ENCODE measurements at regions of chr12 and their contacts with region 1.

Region 1: GRCh38 chr12:72346363-72346944 is 74.3 kb downstream of the TRHDE start:
- DNase-seq: peak; percentile 93
- ATAC-seq: peak; percentile 97
- H3K4me3 ChIP-seq: no peak overlapping the region
- H3K27ac ChIP-seq: no peak overlapping the region
- H3K4me1 ChIP-seq: peaks cover 22% of the 10 kb centered on the region
- H3K27me3 ChIP-seq: no peaks in the 10 kb centered on the region
- CTCF ChIP-seq: peak; percentile 82

Region 2: GRCh38 chr12:71846322-71846940 is 500.0 kb before region 1 on chr12:
- CTCF ChIA-PET with region 1: no interaction called
- POLR2A ChIA-PET with region 1: no interaction called
- intact Hi-C with region 1: no loop called
- DNase-seq: peak; percentile 62
- ATAC-seq: peak; percentile 44; the same call in 1 of the 2 replicates
- H3K4me3 ChIP-seq: no peak overlapping the region
- H3K27ac ChIP-seq: no peak overlapping the region
- H3K4me1 ChIP-seq: peaks cover 11% of the 10 kb centered on the region
- H3K27me3 ChIP-seq: no peaks in the 10 kb centered on the region
- CTCF ChIP-seq: peak; percentile 76

Region 3: DNA sequence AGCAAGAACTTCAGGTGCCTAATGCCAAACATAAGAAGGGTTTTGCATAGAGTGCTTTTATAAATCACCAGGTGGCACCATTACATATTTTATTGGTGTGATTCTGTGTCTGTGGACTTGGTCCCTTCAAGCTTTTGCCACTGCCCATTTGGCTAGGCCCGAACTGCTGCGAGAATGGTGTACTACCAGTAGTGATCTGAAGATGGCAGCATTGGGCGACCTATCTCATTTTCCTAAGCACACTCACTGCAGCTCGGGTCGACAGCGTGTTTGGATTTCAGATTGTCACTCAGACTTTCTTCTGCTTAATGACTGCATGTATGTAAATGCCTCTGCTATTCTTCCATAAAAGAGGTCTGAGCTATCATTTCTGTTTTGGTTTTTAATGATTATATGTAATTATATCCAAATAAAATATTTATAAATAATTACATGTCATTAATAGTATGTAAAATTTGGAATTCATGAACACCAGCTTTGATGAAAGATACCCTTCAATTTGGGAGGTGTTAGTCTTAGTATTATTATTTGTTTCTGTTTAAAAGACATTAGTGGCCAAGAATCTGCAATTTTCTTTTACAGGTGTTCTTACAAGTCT is 329.3 kb before region 1 on chr12:
- CTCF ChIA-PET with region 1: interaction called, 3 read pairs
- POLR2A ChIA-PET with region 1: no interaction called
- intact Hi-C with region 1: loop called (anchors 2 kb)
- DNase-seq: peak; percentile 87
- ATAC-seq: peak; percentile 99
- H3K4me3 ChIP-seq: no peak overlapping the region
- H3K27ac ChIP-seq: no peak overlapping the region
- H3K4me1 ChIP-seq: no peaks in the 10 kb centered on the region
- H3K27me3 ChIP-seq: no peaks in the 10 kb centered on the region
- CTCF ChIP-seq: peak; percentile 86

Region 4: DNA sequence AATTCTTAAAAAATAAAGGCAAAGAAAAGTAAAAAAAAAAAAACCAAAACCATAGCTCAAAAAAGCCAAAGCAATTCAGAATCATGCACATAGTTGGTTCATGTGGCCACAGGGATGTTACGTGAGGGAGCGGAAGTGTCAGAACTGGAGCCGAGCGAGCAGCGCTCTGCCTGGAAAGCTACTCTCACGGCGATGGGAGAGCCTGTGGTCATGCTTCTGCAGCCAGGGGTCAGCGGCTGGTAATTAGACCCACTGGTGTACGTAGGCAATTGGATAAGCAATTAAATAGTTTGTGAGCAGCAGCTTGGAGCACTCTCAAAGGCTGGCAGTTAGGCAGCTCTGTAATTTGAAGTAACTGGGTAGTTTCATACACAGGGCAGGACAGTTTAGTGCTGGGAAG is 16.2 kb before region 1 on chr12:
- CTCF ChIA-PET with region 1: no interaction called
- POLR2A ChIA-PET with region 1: no interaction called
- intact Hi-C with region 1: no loop called
- DNase-seq: no peak
- ATAC-seq: no peak
- H3K4me3 ChIP-seq: no peak overlapping the region
- H3K27ac ChIP-seq: no peak overlapping the region
- H3K4me1 ChIP-seq: 0 out of 2 replicates have a peak, but pooled peaks cover 6% of the 10 kb centered on the region
- H3K27me3 ChIP-seq: no peaks in the 10 kb centered on the region
- CTCF ChIP-seq: no peak

Region 5: DNA sequence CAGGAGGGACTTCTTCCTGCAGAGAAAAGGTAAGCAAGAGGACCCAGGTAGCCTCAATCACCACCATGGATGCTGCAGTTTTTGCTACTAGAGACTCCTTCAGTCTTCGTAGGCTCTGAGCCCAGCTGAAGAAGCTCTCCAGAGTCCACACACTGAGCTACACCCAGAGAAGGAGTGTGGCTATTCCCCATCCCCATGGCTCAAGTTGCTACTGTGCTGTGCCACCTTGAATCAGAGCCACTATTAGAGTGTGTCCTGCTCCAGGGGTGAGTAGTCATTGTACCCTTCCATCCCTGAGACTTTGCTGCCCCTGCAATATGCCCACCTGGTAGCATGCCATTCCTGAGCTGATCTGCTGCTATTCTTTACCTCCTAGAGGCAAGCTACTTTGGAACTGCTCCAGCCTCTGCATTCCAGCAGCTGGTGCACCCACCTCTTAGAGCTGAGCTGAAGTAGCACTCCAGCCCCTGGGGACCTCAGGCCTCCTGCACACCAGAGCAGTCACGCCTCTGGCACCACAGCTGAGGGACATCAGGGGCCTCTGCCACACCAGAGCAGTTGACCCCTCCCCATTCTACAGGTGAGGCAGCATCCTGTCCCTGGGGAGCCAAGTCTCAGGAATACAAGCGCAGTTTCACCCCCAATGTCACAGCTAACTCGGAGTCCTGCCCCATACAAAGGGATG is 138.7 kb after region 1 on chr12:
- CTCF ChIA-PET with region 1: no interaction called
- POLR2A ChIA-PET with region 1: no interaction called
- intact Hi-C with region 1: loop called (anchors 10 kb)
- DNase-seq: no peak
- ATAC-seq: no peak
- H3K4me3 ChIP-seq: no peak overlapping the region
- H3K27ac ChIP-seq: no peak overlapping the region
- H3K4me1 ChIP-seq: no peaks in the 10 kb centered on the region
- H3K27me3 ChIP-seq: no peaks in the 10 kb centered on the region
- CTCF ChIP-seq: no peak

Region 6: DNA sequence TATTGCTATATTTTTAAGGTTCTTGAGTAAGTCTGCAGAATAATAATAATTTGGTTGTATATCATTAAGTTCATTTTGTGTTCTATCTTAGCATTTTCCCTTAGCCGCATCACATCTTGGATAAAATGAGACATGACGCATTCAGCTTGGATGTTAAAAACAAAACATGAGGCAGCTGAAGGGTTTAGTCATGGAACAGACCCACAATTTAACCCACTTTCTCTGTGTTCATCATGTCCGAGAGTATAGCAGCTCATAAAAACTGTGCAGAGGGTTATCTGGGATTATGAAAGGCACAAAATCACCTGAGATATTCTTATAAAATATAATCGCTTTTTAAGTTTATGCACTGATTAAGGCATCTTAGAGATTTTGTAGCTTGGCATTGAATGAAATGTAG is 145.0 kb after region 1 on chr12:
- CTCF ChIA-PET with region 1: interaction called, 10 read pairs
- POLR2A ChIA-PET with region 1: no interaction called
- intact Hi-C with region 1: loop called (anchors 10 kb)
- DNase-seq: no peak
- ATAC-seq: no peak
- H3K4me3 ChIP-seq: no peak overlapping the region
- H3K27ac ChIP-seq: no peak overlapping the region
- H3K4me1 ChIP-seq: no peaks in the 10 kb centered on the region
- H3K27me3 ChIP-seq: no peaks in the 10 kb centered on the region
- CTCF ChIP-seq: no peak

Region 7: DNA sequence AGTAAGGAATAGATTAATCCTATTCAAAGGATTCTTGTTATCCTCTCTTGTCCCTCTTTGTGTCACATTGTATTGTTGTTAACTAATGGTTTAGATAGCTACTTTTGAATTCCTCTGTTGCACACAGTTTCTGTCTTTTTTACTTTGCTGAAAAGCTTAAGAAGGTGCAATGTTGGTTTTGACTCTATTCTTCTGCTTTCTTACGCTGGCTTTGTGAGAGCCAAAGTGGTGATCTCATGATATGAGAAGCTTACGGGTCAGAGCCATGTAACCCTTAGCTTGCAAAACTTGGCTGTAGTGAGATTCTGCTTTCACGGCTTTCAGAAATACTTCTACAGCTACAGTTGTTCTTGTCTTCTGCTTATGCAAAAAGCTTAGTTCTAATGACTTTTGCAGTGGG is 165.5 kb after region 1 on chr12:
- CTCF ChIA-PET with region 1: no interaction called
- POLR2A ChIA-PET with region 1: no interaction called
- intact Hi-C with region 1: no loop called
- DNase-seq: peak; percentile 3
- ATAC-seq: no peak
- H3K4me3 ChIP-seq: no peak overlapping the region
- H3K27ac ChIP-seq: no peak overlapping the region
- H3K4me1 ChIP-seq: no peaks in the 10 kb centered on the region
- H3K27me3 ChIP-seq: no peaks in the 10 kb centered on the region
- CTCF ChIP-seq: no peak

Region 8: GRCh38 chr12:72777806-72778205 is 431.4 kb after region 1 on chr12:
- CTCF ChIA-PET with region 1: no interaction called
- POLR2A ChIA-PET with region 1: no interaction called
- intact Hi-C with region 1: loop called (anchors 1 kb)
- DNase-seq: no peak
- ATAC-seq: no peak
- H3K4me3 ChIP-seq: no peak overlapping the region
- H3K27ac ChIP-seq: no peak overlapping the region
- H3K4me1 ChIP-seq: no peaks in the 10 kb centered on the region
- H3K27me3 ChIP-seq: no peaks in the 10 kb centered on the region
- CTCF ChIP-seq: no peak

Measured in PC-3 (cell line).